ENCODE measurements at regions of chr9 and their contacts with region 1.

Region 1: DNA sequence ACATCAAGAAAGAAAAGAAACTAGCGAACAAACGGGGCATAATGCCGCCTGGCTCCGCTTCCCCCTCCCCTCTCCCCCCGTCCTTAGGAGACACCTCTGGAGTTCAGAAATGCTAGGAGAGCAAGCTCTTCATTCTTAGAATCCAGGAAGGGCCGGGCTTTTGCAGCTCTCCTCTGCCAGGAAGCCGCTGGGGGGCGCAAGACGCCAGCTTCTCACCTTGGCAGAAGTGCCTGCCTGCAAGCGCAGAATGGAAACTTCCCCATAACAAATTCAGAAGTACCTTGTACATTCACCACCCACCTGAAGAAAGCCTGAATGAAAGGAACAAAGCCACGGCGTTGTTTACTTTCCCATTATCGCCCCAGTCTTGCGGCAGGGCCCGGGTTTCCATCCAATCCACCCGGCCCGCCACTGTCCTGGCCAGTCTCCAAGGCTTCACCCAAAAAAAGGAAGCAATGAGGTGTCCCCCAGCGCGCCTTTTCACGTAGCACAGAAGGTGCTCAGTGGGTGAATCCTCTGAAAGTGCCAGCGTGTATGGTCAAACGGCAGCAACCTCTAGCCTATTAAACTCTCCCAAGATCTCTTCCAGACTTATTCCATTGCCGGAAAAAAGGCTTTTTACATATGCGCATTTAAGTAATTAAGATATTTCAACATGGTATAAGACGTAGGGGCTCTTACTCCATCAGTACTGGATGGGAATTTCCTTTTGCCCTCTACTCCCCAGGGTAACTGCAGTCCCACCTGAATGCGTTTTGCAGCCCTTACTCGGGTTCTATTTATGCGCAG is 1.6 kb upstream of the GADD45G start:
- DNase-seq: peak; percentile 94
- H3K4me3 ChIP-seq: peak overlapping the region; percentile 88
- H3K27ac ChIP-seq: no peak overlapping the region
- H3K4me1 ChIP-seq: peaks cover 12% of the 10 kb centered on the region
- H3K27me3 ChIP-seq: no peaks in the 10 kb centered on the region
- CTCF ChIP-seq: peak; percentile 79 to 85 (median 84)
- POLR2A ChIP-seq: no peak

Region 2: GRCh38 chr9:89564352-89564878 is 38.8 kb before region 1 on chr9:
- intact Hi-C with region 1: no loop called
- DNase-seq: no peak
- H3K4me3 ChIP-seq: no peak overlapping the region
- H3K27ac ChIP-seq: no peak overlapping the region
- H3K4me1 ChIP-seq: no peaks in the 10 kb centered on the region
- H3K27me3 ChIP-seq: no peaks in the 10 kb centered on the region
- CTCF ChIP-seq: no peak
- POLR2A ChIP-seq: no peak

Region 3: GRCh38 chr9:89743573-89744361 is 140.6 kb after region 1 on chr9:
- intact Hi-C with region 1: no loop called
- DNase-seq: no peak
- H3K4me3 ChIP-seq: no peak overlapping the region
- H3K27ac ChIP-seq: no peak overlapping the region
- H3K4me1 ChIP-seq: peaks cover 7% of the 10 kb centered on the region
- H3K27me3 ChIP-seq: no peaks in the 10 kb centered on the region
- CTCF ChIP-seq: no peak
- POLR2A ChIP-seq: no peak

Region 4: GRCh38 chr9:89999534-90000370 is 396.6 kb after region 1 on chr9:
- intact Hi-C with region 1: loop called (anchors 10 kb)
- DNase-seq: peak; percentile 90
- H3K4me3 ChIP-seq: no peak overlapping the region
- H3K27ac ChIP-seq: peak overlapping the region; percentile 74 to 84
- H3K4me1 ChIP-seq: peaks cover 50% of the 10 kb centered on the region
- H3K27me3 ChIP-seq: no peaks in the 10 kb centered on the region
- CTCF ChIP-seq: no peak
- POLR2A ChIP-seq: no peak

Region 5: GRCh38 chr9:90099262-90099963 is 496.2 kb after region 1 on chr9:
- intact Hi-C with region 1: loop called (anchors 5 kb)
- DNase-seq: peak; percentile 35
- H3K4me3 ChIP-seq: no peak overlapping the region
- H3K27ac ChIP-seq: no peak overlapping the region
- H3K4me1 ChIP-seq: peaks cover 13% of the 10 kb centered on the region
- H3K27me3 ChIP-seq: no peaks in the 10 kb centered on the region
- CTCF ChIP-seq: peak; percentile 24 to 57 (median 36)
- POLR2A ChIP-seq: no peak

Measured in testis (tissue), 5 donors.